ENCODE measurements at regions of chr18 and their contacts with region 1.

Region 1: DNA sequence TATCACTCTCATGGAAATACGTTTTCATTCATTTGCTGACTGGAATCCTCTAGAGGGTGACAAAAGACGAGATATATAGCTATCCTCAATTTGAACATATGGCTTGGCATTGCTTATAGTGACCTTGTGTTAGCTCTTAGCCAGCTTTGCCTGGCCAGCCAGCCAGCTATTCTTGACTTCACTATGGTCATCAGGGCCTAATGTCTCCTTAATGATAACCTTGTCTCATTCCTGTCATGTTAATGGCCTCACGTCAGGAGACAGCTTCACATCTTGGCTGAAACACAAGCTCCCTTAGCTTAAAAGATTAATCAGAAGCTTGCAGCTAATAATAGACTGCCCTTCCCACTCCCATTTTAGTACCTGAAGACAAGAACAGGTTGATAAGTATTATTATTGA is 1517.5 kb upstream of the PIK3C3 start:
- DNase-seq: peak; percentile 20 to 67 (median 54)
- ATAC-seq: peak; percentile 97 to 99 (median 98)
- H3K4me3 ChIP-seq: no peak overlapping the region
- H3K27ac ChIP-seq: peak overlapping the region in 9 of 12 donors; percentile 23 to 62 (median 55)
- H3K4me1 ChIP-seq: peaks cover 0 to 6% (median 0%) of the 10 kb centered on the region in 12 donors
- H3K27me3 ChIP-seq: no peaks in the 10 kb centered on the region
- CTCF ChIP-seq: no peak
- POLR2A ChIP-seq: no peak

Region 2: DNA sequence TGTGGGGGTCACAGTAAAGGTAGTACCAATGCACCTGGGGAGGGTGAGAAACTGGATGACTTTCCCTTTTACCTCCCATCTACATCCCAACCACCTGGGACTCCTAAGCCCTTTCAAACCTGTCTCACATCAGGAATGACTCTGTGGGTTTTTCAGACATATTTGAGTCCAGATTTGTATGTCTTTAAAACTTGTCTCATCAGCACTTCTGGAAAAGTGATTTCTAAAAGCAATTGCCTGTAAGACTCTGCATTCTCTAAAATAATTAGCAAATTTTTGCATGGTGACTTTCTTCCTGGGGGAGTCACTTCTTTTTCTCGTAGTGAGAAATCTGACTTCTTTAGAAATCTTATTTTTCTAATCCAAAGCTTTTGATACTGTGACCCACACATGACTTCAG is 35.5 kb before region 1 on chr18:
- intact Hi-C with region 1: loop called in 1 of 10 experiments (anchors 2 kb)
- DNase-seq: no peak
- ATAC-seq: no peak
- H3K4me3 ChIP-seq: no peak overlapping the region
- H3K27ac ChIP-seq: no peak overlapping the region
- H3K4me1 ChIP-seq: no peaks in the 10 kb centered on the region
- H3K27me3 ChIP-seq: no peaks in the 10 kb centered on the region
- CTCF ChIP-seq: no peak
- POLR2A ChIP-seq: no peak

Region 3: GRCh38 chr18:40851014-40851429 is 413.5 kb after region 1 on chr18:
- intact Hi-C with region 1: no loop called
- DNase-seq: no peak
- ATAC-seq: no peak
- H3K4me3 ChIP-seq: no peak overlapping the region
- H3K27ac ChIP-seq: no peak overlapping the region
- H3K4me1 ChIP-seq: no peaks in the 10 kb centered on the region
- H3K27me3 ChIP-seq: no peaks in the 10 kb centered on the region
- CTCF ChIP-seq: no peak
- POLR2A ChIP-seq: no peak

Region 4: GRCh38 chr18:41096504-41096903 is 659.0 kb after region 1 on chr18:
- intact Hi-C with region 1: loop called in 1 of 10 experiments (anchors 10 kb)
- DNase-seq: no peak
- ATAC-seq: peak in 3 of 4 donors; percentile 31 to 67 (median 49)
- H3K4me3 ChIP-seq: no peak overlapping the region
- H3K27ac ChIP-seq: no peak overlapping the region
- H3K4me1 ChIP-seq: no peaks in the 10 kb centered on the region
- H3K27me3 ChIP-seq: no peaks in the 10 kb centered on the region
- CTCF ChIP-seq: peak in 3 of 12 donors; percentile 14 to 16 (median 16)
- POLR2A ChIP-seq: no peak

Region 5: DNA sequence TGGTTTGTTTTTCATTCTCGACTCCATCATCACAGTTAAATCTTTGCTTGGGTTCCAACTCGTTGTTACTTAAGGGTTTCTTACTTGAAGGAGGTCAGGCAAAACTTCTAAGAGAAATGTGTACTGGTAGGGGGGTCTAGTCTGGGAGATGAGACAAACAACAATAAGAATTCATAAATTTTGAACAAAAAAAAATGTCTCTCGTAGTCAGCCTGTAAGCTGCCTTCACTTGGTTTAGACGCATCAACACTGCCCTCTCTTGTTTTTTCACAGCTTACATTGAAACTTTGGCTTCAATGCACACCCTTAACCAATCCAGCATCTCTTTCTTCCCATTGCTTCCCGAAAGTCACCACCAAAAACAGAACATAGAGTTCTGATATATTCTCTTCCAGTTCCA is 941.1 kb after region 1 on chr18:
- intact Hi-C with region 1: loop called in 1 of 10 experiments (anchors 10 kb)
- DNase-seq: no peak
- ATAC-seq: no peak
- H3K4me3 ChIP-seq: no peak overlapping the region
- H3K27ac ChIP-seq: no peak overlapping the region
- H3K4me1 ChIP-seq: no peaks in the 10 kb centered on the region
- H3K27me3 ChIP-seq: no peaks in the 10 kb centered on the region
- CTCF ChIP-seq: peak in 2 of 12 donors; percentile 6 to 19
- POLR2A ChIP-seq: no peak

Region 6: DNA sequence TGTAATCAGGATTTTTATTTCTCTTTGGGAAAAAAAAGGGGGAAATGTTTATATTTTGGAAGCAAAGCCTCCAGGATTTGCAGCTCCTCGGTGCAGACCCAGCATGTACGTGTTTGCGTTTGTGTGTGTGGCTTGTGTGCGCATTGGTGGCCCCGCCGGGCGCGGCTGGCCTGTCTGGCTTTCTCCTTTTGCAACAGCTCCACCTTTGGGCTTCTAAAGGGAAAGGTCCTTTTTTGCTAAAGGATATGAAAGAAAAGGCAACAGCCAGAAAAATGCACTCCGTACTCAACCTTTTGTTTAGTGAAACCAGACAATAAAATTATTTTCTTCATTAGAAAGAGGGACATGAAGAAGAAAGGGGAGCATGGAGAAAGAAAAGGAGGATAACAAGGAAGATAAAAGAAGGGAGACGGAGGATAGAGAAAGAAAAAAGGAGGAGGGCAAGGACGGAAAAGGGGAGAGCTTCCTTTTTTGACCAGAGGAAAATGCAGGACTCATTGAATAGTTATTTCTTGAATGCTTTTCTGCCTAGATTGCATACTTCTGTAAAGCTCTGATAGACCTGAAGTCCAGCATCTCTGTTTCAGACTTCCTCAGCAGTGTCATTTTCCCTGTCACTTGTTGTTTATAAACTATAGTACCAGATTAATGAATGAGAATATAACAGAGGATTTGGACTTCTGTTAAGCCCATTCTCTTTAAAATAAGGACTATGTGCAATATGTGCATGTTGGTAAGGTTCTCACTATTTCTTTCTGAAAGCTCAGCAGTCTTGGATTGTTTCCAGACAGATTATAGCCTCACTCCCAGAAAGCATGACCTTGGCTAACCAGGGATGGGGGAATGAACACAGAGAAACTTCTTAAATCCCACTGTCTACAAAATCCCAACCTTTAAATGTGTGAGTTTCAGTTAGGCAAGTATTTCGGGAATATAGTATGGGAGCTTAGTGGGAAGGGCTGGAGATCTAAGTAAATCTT is 954.4 kb after region 1 on chr18:
- intact Hi-C with region 1: loop called in 1 of 10 experiments (anchors 10 kb)
- DNase-seq: peak in 3 of 5 donors; percentile 7 to 67 (median 59)
- ATAC-seq: peak; percentile 66 to 77 (median 70)
- H3K4me3 ChIP-seq: peak overlapping the region in 6 of 12 donors; percentile 27 to 45 (median 30)
- H3K27ac ChIP-seq: no peak overlapping the region
- H3K4me1 ChIP-seq: peaks cover 0 to 5% (median 0%) of the 10 kb centered on the region in 12 donors
- H3K27me3 ChIP-seq: no peaks in the 10 kb centered on the region
- CTCF ChIP-seq: peak; percentile 15 to 61 (median 50)
- POLR2A ChIP-seq: no peak